ENCODE measurements at regions of chr1 and their contacts with region 1.

Region 1: DNA sequence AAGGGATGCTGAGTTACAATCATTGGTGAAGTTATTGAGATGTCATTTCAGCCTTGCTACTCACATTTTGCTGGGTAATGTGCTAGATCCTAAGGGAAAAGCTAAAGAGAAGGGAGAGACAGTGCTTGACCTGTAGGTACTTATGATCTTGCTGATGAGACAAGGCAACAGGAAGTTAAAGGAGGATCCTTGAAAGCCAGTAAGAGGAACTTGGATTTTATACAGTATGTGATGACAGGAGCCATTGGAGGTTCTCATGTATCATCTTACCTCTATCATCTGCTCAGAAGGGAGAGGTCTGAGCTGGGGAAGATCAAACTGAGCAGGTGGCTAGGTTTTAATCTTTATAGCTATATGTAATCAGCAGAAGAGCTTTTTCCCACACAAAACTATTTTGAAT is 6.3 kb downstream of the APOBEC4 start:
- DNase-seq: no peak
- CTCF ChIP-seq: no peak

Region 2: DNA sequence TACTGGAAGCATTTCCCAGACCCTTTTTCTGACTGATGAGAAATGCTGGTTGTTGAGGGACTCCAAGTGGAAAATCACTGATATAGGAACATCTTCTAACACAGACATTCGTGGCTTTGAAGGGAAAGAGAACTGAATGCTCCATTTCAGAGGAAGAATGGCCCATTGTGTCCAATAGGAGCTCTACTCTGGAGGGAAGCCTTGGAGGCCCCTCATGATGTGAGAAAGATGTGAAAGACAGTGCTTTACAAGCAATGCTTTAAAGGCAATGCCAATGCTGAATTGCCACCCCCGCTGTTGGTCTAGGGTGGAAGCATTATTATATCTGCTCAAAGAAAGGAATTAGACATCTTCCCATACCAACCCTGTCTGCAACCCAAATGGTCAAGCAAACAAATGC is 242.3 kb before region 1 on chr1:
- in situ Hi-C with region 1: no loop called
- DNase-seq: no peak
- CTCF ChIP-seq: no peak

Region 3: GRCh38 chr1:183842795-183843144 is 196.0 kb after region 1 on chr1:
- in situ Hi-C with region 1: no loop called
- DNase-seq: no peak
- CTCF ChIP-seq: no peak

Region 4: DNA sequence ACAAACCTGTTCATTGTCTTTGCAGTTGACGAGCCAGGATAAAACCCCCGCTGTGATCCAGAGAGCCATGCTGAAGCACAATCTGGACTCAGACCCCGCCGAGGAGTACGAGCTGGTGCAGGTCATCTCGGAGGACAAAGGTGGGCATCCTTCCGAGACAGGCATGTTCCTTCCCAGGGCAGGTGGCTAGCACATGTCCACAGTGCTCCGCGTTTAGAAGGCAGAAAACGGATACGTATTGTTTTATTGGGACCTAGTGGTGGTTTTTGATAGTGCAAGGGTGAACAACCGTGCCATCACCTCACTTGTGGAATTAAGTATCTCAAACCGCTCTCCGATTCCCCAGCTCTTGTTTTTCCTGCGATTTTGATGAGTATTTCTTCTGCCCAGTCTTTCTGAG is 275.4 kb after region 1 on chr1:
- in situ Hi-C with region 1: loop called (anchors 5 kb)
- DNase-seq: no peak
- CTCF ChIP-seq: no peak